ENCODE measurements at regions of chr11 and their contacts with region 1.

Region 1: DNA sequence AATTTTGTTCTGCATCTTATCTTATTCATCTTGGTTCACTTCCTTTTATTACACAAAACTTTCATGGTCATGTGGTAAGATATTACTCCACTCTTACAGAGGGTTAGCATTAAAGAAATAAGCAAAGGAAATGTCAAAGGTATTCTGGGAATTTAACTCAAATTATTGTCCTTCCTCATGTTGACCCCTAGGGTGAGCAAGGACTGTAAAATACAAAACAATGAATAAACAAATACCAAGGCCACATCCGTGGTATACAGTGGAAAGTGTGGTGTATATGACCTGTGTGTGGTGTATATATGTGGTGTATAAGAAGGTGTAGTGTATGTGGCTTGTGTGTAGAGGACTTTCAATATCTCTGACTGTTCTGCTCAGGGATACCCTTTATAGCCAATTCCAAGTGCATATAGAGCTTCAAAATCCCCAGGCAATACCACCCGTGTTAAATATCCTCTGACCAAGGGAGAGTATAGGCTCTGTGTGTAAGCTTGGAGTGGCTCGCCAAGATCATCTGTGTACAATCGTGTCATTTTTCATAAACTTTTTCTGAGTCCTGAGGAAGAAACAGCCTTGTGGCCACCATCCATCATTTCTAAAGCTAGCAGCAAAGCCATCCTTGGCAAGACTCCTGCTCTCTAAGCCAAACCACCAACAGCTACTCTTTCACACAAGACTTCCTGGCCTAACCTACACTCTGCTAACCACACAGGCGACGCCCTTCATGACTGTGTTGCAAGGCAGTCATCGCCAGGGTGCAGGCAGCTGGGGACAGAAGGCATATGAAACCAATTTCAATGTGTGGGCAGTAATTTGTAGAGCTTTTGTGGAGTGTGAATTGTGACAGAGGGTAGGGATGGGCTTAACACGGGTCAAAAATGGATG is 548.0 kb downstream of the ETS1 start:
- DNase-seq: no peak
- ATAC-seq: no peak
- H3K4me3 ChIP-seq: no peak overlapping the region
- H3K27ac ChIP-seq: no peak overlapping the region
- H3K4me1 ChIP-seq: no peaks in the 10 kb centered on the region
- H3K27me3 ChIP-seq: no peaks in the 10 kb centered on the region
- CTCF ChIP-seq: no peak
- POLR2A ChIP-seq: no peak
- RAD21 ChIP-seq: no peak

Region 2: GRCh38 chr11:127919206-127920000 is 120.0 kb before region 1 on chr11:
- CTCF ChIA-PET with region 1: no interaction called
- POLR2A ChIA-PET with region 1: no interaction called
- RAD21 ChIA-PET with region 1: no interaction called
- intact Hi-C with region 1: no loop called
- DNase-seq: no peak
- ATAC-seq: no peak
- H3K4me3 ChIP-seq: no peak overlapping the region
- H3K27ac ChIP-seq: no peak overlapping the region
- H3K4me1 ChIP-seq: no peaks in the 10 kb centered on the region
- H3K27me3 ChIP-seq: no peaks in the 10 kb centered on the region
- CTCF ChIP-seq: no peak
- POLR2A ChIP-seq: no peak
- RAD21 ChIP-seq: no peak

Region 3: GRCh38 chr11:128018692-128019091 is 20.7 kb before region 1 on chr11:
- CTCF ChIA-PET with region 1: no interaction called
- POLR2A ChIA-PET with region 1: no interaction called
- RAD21 ChIA-PET with region 1: no interaction called
- intact Hi-C with region 1: no loop called
- DNase-seq: no peak
- ATAC-seq: no peak
- H3K4me3 ChIP-seq: no peak overlapping the region
- H3K27ac ChIP-seq: no peak overlapping the region
- H3K4me1 ChIP-seq: no peaks in the 10 kb centered on the region
- H3K27me3 ChIP-seq: no peaks in the 10 kb centered on the region
- CTCF ChIP-seq: no peak
- POLR2A ChIP-seq: no peak
- RAD21 ChIP-seq: no peak

Region 4: DNA sequence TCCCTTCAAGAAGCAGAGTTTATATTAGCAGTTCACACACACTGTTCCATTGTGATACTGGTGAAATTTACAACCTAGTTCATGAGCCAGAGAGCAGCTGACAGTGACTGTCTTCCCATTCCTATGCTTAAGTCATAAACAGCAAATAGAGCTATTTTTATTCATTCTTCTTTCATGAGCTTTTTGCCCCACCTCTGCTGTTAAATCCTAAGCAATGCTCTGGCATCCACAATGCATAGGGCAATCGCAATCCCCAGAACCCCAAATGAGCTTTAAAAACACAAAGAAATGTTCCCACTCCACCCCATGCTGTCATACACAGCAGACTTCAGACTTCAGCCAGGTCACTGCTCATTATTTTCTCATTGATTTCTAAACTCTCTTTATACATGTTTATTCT is 240.5 kb after region 1 on chr11:
- CTCF ChIA-PET with region 1: no interaction called
- POLR2A ChIA-PET with region 1: no interaction called
- RAD21 ChIA-PET with region 1: no interaction called
- intact Hi-C with region 1: loop called (anchors 10 kb)
- DNase-seq: no peak
- ATAC-seq: no peak
- H3K4me3 ChIP-seq: no peak overlapping the region
- H3K27ac ChIP-seq: no peak overlapping the region
- H3K4me1 ChIP-seq: no peaks in the 10 kb centered on the region
- H3K27me3 ChIP-seq: peaks cover 23% of the 10 kb centered on the region
- CTCF ChIP-seq: no peak
- POLR2A ChIP-seq: no peak
- RAD21 ChIP-seq: no peak

Region 5: GRCh38 chr11:128630367-128631230 is 591.2 kb after region 1 on chr11:
- CTCF ChIA-PET with region 1: no interaction called
- POLR2A ChIA-PET with region 1: no interaction called
- RAD21 ChIA-PET with region 1: no interaction called
- intact Hi-C with region 1: loop called (anchors 5 kb)
- DNase-seq: peak; percentile 56
- ATAC-seq: peak; percentile 87
- H3K4me3 ChIP-seq: no peak overlapping the region
- H3K27ac ChIP-seq: no peak overlapping the region
- H3K4me1 ChIP-seq: no peaks in the 10 kb centered on the region
- H3K27me3 ChIP-seq: no peaks in the 10 kb centered on the region; the same call in 1 of the 2 replicates
- CTCF ChIP-seq: peak; percentile 79 to 95 (median 89)
- POLR2A ChIP-seq: no peak
- RAD21 ChIP-seq: peak; percentile 93

Region 6: DNA sequence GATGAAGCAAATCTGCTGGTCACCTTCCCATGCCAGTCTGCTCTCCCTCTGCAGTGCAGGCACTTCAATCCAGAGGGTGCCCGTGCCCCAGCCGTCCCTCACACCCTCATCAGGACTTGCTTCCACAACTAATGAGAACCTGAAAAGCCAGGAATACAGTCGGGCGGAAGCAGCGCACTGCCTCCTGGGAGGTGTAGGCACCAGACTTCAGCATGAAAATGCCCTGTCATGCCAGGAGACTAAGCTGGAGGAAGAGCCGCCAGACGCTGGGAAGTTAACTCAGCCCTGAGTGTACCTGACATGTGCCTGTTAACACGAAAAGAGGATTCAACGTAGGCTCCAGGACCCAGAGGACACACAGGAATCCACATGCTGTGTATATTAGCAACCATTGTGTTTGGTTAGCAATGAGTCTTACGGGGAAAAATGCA is 614.4 kb after region 1 on chr11:
- CTCF ChIA-PET with region 1: no interaction called
- POLR2A ChIA-PET with region 1: no interaction called
- RAD21 ChIA-PET with region 1: no interaction called
- intact Hi-C with region 1: loop called (anchors 10 kb)
- DNase-seq: no peak
- ATAC-seq: no peak
- H3K4me3 ChIP-seq: no peak overlapping the region
- H3K27ac ChIP-seq: no peak overlapping the region
- H3K4me1 ChIP-seq: no peaks in the 10 kb centered on the region
- H3K27me3 ChIP-seq: peaks cover 15% of the 10 kb centered on the region; the same call in 1 of the 2 replicates
- CTCF ChIP-seq: no peak
- POLR2A ChIP-seq: no peak
- RAD21 ChIP-seq: no peak

Region 7: DNA sequence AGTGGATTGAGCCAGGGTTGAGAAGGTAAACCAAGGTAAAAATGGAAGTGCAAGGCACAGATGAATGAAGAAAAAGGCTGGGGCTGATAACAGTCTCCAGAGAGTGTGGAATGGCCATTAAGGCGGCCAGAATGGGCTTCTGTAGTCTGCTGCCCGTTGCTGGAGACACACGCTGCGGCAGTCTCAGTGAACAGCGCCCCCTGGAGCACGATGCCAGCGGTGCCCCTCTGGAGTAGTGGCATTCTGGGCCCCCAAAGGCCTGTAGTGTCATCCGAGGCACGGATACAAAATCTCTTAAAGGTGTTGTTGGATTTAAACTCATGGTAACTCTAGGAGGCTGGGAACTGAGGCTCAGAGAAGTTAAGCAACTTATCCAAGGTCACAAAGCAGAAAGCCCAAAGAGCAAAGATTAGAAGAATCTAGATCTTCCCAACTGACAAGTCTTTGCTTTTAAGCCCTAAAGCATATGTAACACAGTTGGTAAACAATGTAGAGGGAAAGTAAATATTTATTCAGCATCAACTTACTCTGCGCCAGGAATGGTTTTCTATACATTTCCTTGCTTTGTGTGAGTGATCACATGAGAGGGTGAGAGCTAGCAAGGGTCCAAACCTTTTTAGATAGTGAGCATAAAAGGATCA is 809.6 kb after region 1 on chr11:
- CTCF ChIA-PET with region 1: no interaction called
- POLR2A ChIA-PET with region 1: no interaction called
- RAD21 ChIA-PET with region 1: no interaction called
- intact Hi-C with region 1: loop called (anchors 5 kb)
- DNase-seq: peak; percentile 49
- ATAC-seq: peak; percentile 100
- H3K4me3 ChIP-seq: no peak overlapping the region
- H3K27ac ChIP-seq: no peak overlapping the region
- H3K4me1 ChIP-seq: no peaks in the 10 kb centered on the region
- H3K27me3 ChIP-seq: peaks cover 17% of the 10 kb centered on the region
- CTCF ChIP-seq: peak; percentile 67 to 98 (median 97)
- POLR2A ChIP-seq: no peak
- RAD21 ChIP-seq: peak; percentile 65

Region 8: GRCh38 chr11:128956401-128957201 is 917.2 kb after region 1 on chr11:
- CTCF ChIA-PET with region 1: no interaction called
- POLR2A ChIA-PET with region 1: no interaction called
- RAD21 ChIA-PET with region 1: no interaction called
- intact Hi-C with region 1: loop called (anchors 5 kb)
- DNase-seq: peak; percentile 73
- ATAC-seq: peak; percentile 94
- H3K4me3 ChIP-seq: no peak overlapping the region
- H3K27ac ChIP-seq: no peak overlapping the region
- H3K4me1 ChIP-seq: no peaks in the 10 kb centered on the region
- H3K27me3 ChIP-seq: no peaks in the 10 kb centered on the region
- CTCF ChIP-seq: peak; percentile 58 to 95 (median 76)
- POLR2A ChIP-seq: no peak
- RAD21 ChIP-seq: peak; percentile 94

Measured in HCT116 (cell line).